CD8-positive, alpha-beta T cell (primary cell): ENCODE measurements at regions of chr17 and their contacts with region 1.

Region 1: GRCh38 chr17:27353461-27354050 is 59.6 kb downstream of the WSB1 start:
- DNase-seq: peak; percentile 67 to 94 (median 86)
- ATAC-seq: peak; percentile 95
- H3K4me3 ChIP-seq: peak overlapping the region; percentile 66 to 78
- H3K4me3 Mint-ChIP-seq: peak overlapping the region; percentile 77
- H3K27ac ChIP-seq: peak overlapping the region; percentile 68 to 84
- H3K27ac Mint-ChIP-seq: peak overlapping the region; percentile 93
- H3K4me1 ChIP-seq: peaks cover 18% of the 10 kb centered on the region
- H3K4me1 Mint-ChIP-seq: peaks cover 17% of the 10 kb centered on the region
- H3K27me3 ChIP-seq: no peaks in the 10 kb centered on the region
- H3K27me3 Mint-ChIP-seq: no peaks in the 10 kb centered on the region
- CTCF ChIP-seq: peak; percentile 91

Region 2: DNA sequence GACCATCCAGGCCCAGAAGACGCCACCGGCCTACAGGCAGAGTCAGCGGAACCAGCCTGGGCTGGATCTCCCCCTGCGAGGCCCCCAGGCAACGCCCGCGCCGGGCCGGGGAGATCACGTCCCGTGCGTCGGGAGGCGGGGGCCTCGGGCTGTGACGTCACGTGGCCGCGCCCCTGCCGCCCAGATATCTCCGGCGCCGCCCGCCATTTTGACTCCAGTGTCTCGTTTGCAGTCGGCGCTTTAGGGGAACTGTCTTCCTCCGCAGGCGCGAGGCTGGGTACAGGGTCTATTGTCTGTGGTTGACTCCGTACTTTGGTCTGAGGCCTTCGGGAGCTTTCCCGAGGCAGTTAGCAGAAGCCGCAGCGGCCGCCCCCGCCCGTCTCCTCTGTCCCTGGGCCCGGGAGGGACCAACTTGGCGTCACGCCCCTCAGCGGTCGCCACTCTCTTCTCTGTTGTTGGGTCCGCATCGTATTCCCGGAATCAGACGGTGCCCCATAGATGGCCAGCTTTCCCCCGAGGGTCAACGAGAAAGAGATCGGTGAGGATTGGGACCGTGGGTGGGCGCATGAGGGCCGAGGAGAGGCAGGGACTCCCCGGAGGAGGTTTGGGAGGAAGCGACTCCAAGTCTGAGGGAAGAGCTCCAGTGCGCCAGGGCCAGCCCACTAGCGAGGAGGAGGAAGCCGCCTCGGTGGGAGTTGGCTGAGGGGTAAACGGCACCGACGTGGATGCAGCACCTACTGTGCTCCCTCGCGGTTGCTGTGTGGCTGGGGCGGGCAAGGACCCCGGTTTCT is 59.5 kb before region 1 on chr17 and contains the start of gene WSB1:
- CTCF ChIA-PET with region 1: interaction called, 4 read pairs
- POLR2A ChIA-PET with region 1: interaction called, 4 read pairs
- intact Hi-C with region 1: loop called (anchors 1 kb)
- DNase-seq: peak; percentile 86 to 97 (median 92)
- ATAC-seq: peak; percentile 84
- H3K4me3 ChIP-seq: peak within 1 kb of the TSS; percentile 89 to 99
- H3K4me3 Mint-ChIP-seq: peak within 1 kb of the TSS; percentile 93
- H3K27ac ChIP-seq: peak within 1 kb of the TSS; percentile 98 to 99
- H3K27ac Mint-ChIP-seq: peak within 1 kb of the TSS; percentile 100
- H3K4me1 ChIP-seq: peaks cover 27% of the 10 kb centered on the region
- H3K4me1 Mint-ChIP-seq: peaks cover 36% of the 10 kb centered on the region
- H3K27me3 ChIP-seq: no peaks in the 10 kb centered on the region
- H3K27me3 Mint-ChIP-seq: no peaks in the 10 kb centered on the region
- CTCF ChIP-seq: no peak
- total RNA-seq, gene WSB1: 89.0 to 91.1 TPM

Region 3: GRCh38 chr17:27381007-27381501 is 27.5 kb after region 1 on chr17:
- CTCF ChIA-PET with region 1: interaction called, 7 read pairs
- POLR2A ChIA-PET with region 1: no interaction called
- intact Hi-C with region 1: loop called in 1 of 2 experiments (anchors 2 kb)
- DNase-seq: peak; percentile 47 to 84 (median 74)
- ATAC-seq: peak; percentile 98
- H3K4me3 ChIP-seq: no peak overlapping the region
- H3K4me3 Mint-ChIP-seq: no peak overlapping the region
- H3K27ac ChIP-seq: no peak overlapping the region
- H3K27ac Mint-ChIP-seq: no peak overlapping the region
- H3K4me1 ChIP-seq: no peaks in the 10 kb centered on the region
- H3K4me1 Mint-ChIP-seq: peaks cover 4% of the 10 kb centered on the region
- H3K27me3 ChIP-seq: no peaks in the 10 kb centered on the region
- H3K27me3 Mint-ChIP-seq: peaks cover 23% of the 10 kb centered on the region
- CTCF ChIP-seq: peak; percentile 84

Region 4: GRCh38 chr17:27578718-27579085 is 225.1 kb after region 1 on chr17:
- CTCF ChIA-PET with region 1: no interaction called
- POLR2A ChIA-PET with region 1: no interaction called
- intact Hi-C with region 1: no loop called
- DNase-seq: no peak
- ATAC-seq: no peak
- H3K4me3 ChIP-seq: no peak overlapping the region
- H3K4me3 Mint-ChIP-seq: no peak overlapping the region
- H3K27ac ChIP-seq: no peak overlapping the region
- H3K27ac Mint-ChIP-seq: no peak overlapping the region
- H3K4me1 ChIP-seq: no peaks in the 10 kb centered on the region
- H3K4me1 Mint-ChIP-seq: peaks cover 5% of the 10 kb centered on the region
- H3K27me3 ChIP-seq: no peaks in the 10 kb centered on the region
- H3K27me3 Mint-ChIP-seq: no peaks in the 10 kb centered on the region
- CTCF ChIP-seq: no peak